ENCODE measurements at regions of chr3 and their contacts with region 1.

Region 1: GRCh38 chr3:19866751-19867347 is 67.2 kb downstream of the EFHB start:
- DNase-seq: peak in 1 of 2 donors; percentile 63
- ATAC-seq: peak in 1 of 3 donors; percentile 53
- H3K4me3 ChIP-seq: no peak overlapping the region
- H3K4me3 Mint-ChIP-seq: no peak overlapping the region
- H3K27ac ChIP-seq: no peak overlapping the region
- H3K27ac Mint-ChIP-seq: no peak overlapping the region
- H3K4me1 ChIP-seq: no peaks in the 10 kb centered on the region
- H3K4me1 Mint-ChIP-seq: peaks cover 0 to 4% of the 10 kb centered on the region in 2 donors
- H3K27me3 ChIP-seq: no peaks in the 10 kb centered on the region
- H3K27me3 Mint-ChIP-seq: peaks cover 4 to 22% of the 10 kb centered on the region in 2 donors
- CTCF ChIP-seq: peak; percentile 63

Region 2: GRCh38 chr3:19046440-19046839 is 820.4 kb before region 1 on chr3:
- intact Hi-C with region 1: loop called (anchors 5 kb)
- DNase-seq: no peak
- ATAC-seq: no peak
- H3K4me3 ChIP-seq: no peak overlapping the region
- H3K4me3 Mint-ChIP-seq: no peak overlapping the region
- H3K27ac ChIP-seq: no peak overlapping the region
- H3K27ac Mint-ChIP-seq: no peak overlapping the region
- H3K4me1 ChIP-seq: no peaks in the 10 kb centered on the region
- H3K4me1 Mint-ChIP-seq: no peaks in the 10 kb centered on the region
- H3K27me3 ChIP-seq: no peaks in the 10 kb centered on the region
- H3K27me3 Mint-ChIP-seq: peaks cover under 1 to 9% of the 10 kb centered on the region in 2 donors
- CTCF ChIP-seq: no peak

Region 3: GRCh38 chr3:19972051-19972454 is 105.2 kb after region 1 on chr3:
- intact Hi-C with region 1: no loop called
- DNase-seq: no peak
- ATAC-seq: no peak
- H3K4me3 ChIP-seq: no peak overlapping the region
- H3K4me3 Mint-ChIP-seq: no peak overlapping the region
- H3K27ac ChIP-seq: no peak overlapping the region
- H3K27ac Mint-ChIP-seq: peak overlapping the region; percentile 56 to 63
- H3K4me1 ChIP-seq: no peaks in the 10 kb centered on the region
- H3K4me1 Mint-ChIP-seq: peaks cover 37 to 38% of the 10 kb centered on the region in 2 donors
- H3K27me3 ChIP-seq: no peaks in the 10 kb centered on the region
- H3K27me3 Mint-ChIP-seq: no peaks in the 10 kb centered on the region
- CTCF ChIP-seq: no peak

Measured in natural killer cell (primary cell).